ENCODE measurements at regions of chrX and their contacts with region 1.

Region 1: GRCh38 chrX:134388161-134389109 is 71.5 kb upstream of the HPRT1 start:
- DNase-seq: no peak
- H3K4me3 Mint-ChIP-seq: no peak overlapping the region
- H3K27ac Mint-ChIP-seq: no peak overlapping the region
- H3K4me1 Mint-ChIP-seq: no peaks in the 10 kb centered on the region
- H3K27me3 Mint-ChIP-seq: no peaks in the 10 kb centered on the region
- CTCF ChIP-seq: no peak

Region 2: DNA sequence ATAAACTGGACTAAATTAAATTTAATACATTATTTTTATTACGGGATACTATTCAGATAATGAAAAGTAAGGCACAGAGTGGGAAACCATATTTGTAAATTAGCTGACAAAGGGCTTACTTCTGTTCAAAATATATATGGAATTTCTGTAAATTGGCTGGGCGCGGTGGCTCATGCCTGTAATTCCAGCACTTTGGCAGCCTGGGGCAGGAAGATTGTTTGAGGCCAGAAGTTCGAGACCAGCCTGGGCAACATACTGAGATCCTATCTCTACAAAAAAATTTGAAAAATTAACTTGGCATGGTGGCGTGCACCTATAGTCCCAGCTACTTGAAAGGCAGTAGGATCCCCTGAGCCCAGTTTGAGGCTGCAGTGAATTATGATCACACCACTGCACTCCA is 32.4 kb before region 1 on chrX:
- CTCF ChIA-PET with region 1: no interaction called
- intact Hi-C with region 1: loop called (anchors 1 kb)
- DNase-seq: no peak
- H3K4me3 Mint-ChIP-seq: no peak overlapping the region
- H3K27ac Mint-ChIP-seq: no peak overlapping the region
- H3K4me1 Mint-ChIP-seq: no peaks in the 10 kb centered on the region
- H3K27me3 Mint-ChIP-seq: no peaks in the 10 kb centered on the region
- CTCF ChIP-seq: no peak

Measured in Calu3 (cell line).